CD8-positive, alpha-beta T cell (primary cell): ENCODE measurements at regions of chr4 and their contacts with region 1.

Region 1: DNA sequence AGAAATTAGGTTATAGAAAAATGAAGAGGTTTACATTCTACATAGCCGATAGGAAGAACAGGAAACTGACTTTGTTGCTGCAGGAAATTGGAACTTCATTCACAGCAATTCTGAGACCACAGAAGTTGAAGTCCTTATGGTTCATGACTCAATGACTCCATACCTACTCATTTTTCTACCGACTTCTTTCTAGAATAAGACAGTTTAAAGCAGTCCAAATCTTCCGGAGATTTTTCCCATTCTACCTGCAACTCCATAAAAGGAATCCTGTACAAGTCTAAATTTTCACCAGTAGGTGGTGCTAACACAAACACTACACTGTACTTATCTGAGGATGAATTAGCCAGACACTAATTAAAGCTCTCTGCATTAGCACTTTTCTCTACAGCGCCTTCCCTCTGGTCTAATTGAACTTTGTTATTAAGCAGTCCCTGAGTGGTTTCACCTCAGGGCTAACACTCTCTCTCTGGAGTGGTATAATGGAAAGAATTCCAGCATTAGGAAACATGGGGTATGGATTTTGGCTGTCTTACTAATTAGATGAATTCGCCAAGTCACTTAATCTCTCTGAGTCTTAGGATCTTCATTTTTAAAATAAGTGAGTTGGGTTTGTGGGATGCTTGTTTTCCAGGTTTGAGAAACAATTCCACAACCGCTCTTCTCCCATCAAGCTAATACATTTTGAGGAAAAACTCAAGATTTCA is 167.9 kb downstream of the SMIM20 start:
- DNase-seq: peak in 2 of 9 experiments; percentile 58 to 66
- ATAC-seq: no peak
- H3K4me3 ChIP-seq: no peak overlapping the region
- H3K4me3 Mint-ChIP-seq: no peak overlapping the region
- H3K27ac ChIP-seq: no peak overlapping the region
- H3K27ac Mint-ChIP-seq: no peak overlapping the region
- H3K4me1 ChIP-seq: no peaks in the 10 kb centered on the region
- H3K4me1 Mint-ChIP-seq: peaks cover 4% of the 10 kb centered on the region
- H3K27me3 ChIP-seq: no peaks in the 10 kb centered on the region
- H3K27me3 Mint-ChIP-seq: peaks cover 17% of the 10 kb centered on the region
- CTCF ChIP-seq: peak; percentile 53

Region 2: DNA sequence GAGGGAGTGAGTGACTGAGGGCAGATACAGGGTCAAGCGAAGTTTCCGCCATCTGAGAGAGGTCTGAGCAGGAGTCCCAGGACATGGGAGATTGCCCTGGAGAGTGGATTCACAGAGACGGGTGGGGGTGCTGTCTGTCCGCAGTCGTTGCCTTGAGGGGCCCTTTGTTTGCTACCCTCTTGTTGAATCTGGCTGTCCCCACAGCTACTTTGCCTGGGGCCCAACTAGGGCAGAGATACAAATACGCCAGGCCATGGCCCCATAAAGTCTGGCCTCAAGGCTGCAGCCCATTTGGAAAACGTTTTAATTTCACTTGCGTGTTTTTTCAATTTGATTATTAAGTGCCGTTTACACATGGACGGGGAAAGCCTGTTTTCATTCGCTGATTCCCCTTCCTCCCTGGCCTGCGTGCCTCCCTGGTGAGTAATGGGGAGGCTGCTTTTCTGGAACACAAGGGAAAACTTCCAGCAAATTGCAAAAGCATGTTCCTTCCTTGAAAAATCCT is 33.5 kb before region 1 on chr4:
- CTCF ChIA-PET with region 1: no interaction called
- POLR2A ChIA-PET with region 1: no interaction called
- intact Hi-C with region 1: no loop called
- DNase-seq: no peak
- ATAC-seq: no peak
- H3K4me3 ChIP-seq: no peak overlapping the region
- H3K4me3 Mint-ChIP-seq: no peak overlapping the region
- H3K27ac ChIP-seq: no peak overlapping the region
- H3K27ac Mint-ChIP-seq: no peak overlapping the region
- H3K4me1 ChIP-seq: no peaks in the 10 kb centered on the region
- H3K4me1 Mint-ChIP-seq: no peaks in the 10 kb centered on the region
- H3K27me3 ChIP-seq: no peaks in the 10 kb centered on the region
- H3K27me3 Mint-ChIP-seq: peaks cover 14% of the 10 kb centered on the region
- CTCF ChIP-seq: no peak

Region 3: DNA sequence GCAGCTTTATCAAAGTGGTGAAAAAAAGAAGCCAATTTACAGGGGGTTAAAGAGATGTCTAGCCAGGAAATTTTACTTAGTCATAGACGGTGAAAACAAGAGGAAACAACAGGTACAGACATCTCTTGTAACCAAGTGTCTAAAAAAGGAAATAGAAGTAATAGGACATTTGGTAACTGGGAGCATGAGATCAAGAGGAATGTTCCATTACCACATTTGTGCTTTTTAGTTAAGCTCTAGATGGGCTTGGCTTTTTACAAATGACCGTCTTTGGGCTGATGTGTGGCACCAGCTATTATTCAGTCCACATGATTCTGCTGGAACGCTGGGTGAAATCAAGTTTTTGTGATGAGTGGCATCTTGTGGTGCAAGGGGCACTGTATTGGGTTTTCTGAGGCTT is 11.6 kb after region 1 on chr4:
- CTCF ChIA-PET with region 1: interaction called, 21 read pairs
- POLR2A ChIA-PET with region 1: no interaction called
- intact Hi-C with region 1: no loop called
- DNase-seq: no peak
- ATAC-seq: peak; percentile 44
- H3K4me3 ChIP-seq: no peak overlapping the region
- H3K4me3 Mint-ChIP-seq: no peak overlapping the region
- H3K27ac ChIP-seq: no peak overlapping the region
- H3K27ac Mint-ChIP-seq: no peak overlapping the region
- H3K4me1 ChIP-seq: no peaks in the 10 kb centered on the region
- H3K4me1 Mint-ChIP-seq: peaks cover 5% of the 10 kb centered on the region
- H3K27me3 ChIP-seq: no peaks in the 10 kb centered on the region
- H3K27me3 Mint-ChIP-seq: peaks cover 3% of the 10 kb centered on the region
- CTCF ChIP-seq: no peak

Region 4: GRCh38 chr4:26404743-26405206 is 322.8 kb after region 1 on chr4:
- CTCF ChIA-PET with region 1: interaction called, 17 read pairs
- POLR2A ChIA-PET with region 1: no interaction called
- intact Hi-C with region 1: no loop called
- DNase-seq: no peak
- ATAC-seq: no peak
- H3K4me3 ChIP-seq: no peak overlapping the region
- H3K4me3 Mint-ChIP-seq: no peak overlapping the region
- H3K27ac ChIP-seq: no peak overlapping the region
- H3K27ac Mint-ChIP-seq: no peak overlapping the region
- H3K4me1 ChIP-seq: no peaks in the 10 kb centered on the region
- H3K4me1 Mint-ChIP-seq: peaks cover 6% of the 10 kb centered on the region
- H3K27me3 ChIP-seq: no peaks in the 10 kb centered on the region
- H3K27me3 Mint-ChIP-seq: no peaks in the 10 kb centered on the region
- CTCF ChIP-seq: no peak